ENCODE measurements at regions of chr6 and their contacts with region 1.

Region 1: GRCh38 chr6:130215526-130215925 is 7.2 kb downstream of the SAMD3 start:
- DNase-seq: peak; percentile 71 to 82 (median 78)
- H3K4me3 ChIP-seq: peak overlapping the region; percentile 7 to 39
- H3K4me3 Mint-ChIP-seq: peak overlapping the region; percentile 79 to 95 (median 86)
- H3K27ac ChIP-seq: peak overlapping the region; percentile 23
- H3K27ac Mint-ChIP-seq: peak overlapping the region; percentile 25 to 89 (median 69)
- H3K4me1 ChIP-seq: peaks cover 77% of the 10 kb centered on the region
- H3K4me1 Mint-ChIP-seq: peaks cover 38 to 78% (median 61%) of the 10 kb centered on the region in 4 donors
- H3K27me3 ChIP-seq: no peaks in the 10 kb centered on the region
- H3K27me3 Mint-ChIP-seq: no peaks in the 10 kb centered on the region

Region 2: DNA sequence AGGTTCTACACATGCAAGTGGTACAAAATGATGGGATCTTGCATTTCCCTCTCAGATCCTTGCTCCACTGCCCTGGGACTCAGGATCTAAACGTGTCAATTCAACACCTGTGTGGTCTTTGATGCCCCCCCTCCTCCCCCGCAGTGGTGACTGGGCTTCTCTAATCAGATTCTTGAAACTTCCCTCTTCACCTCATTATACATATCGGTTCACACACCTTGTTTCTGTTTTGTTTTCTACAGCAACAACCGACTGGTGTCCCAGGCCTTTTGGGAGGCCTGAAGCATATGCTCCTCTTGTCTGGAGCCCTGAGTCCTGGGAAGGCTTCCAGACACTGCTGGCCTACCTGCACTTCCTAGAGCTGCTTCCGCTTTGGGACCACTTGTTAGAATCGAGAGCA is 12.7 kb before region 1 on chr6:
- CTCF ChIA-PET with region 1: interaction called, 4 read pairs
- POLR2A ChIA-PET with region 1: interaction called, 57 read pairs
- intact Hi-C with region 1: loop called (anchors 1 kb)
- DNase-seq: peak in 1 of 5 donors; percentile 64
- H3K4me3 ChIP-seq: peak overlapping the region in 1 of 2 donors; percentile 5
- H3K4me3 Mint-ChIP-seq: peak overlapping the region in 7 of 8 donors; percentile 7 to 81 (median 47)
- H3K27ac ChIP-seq: no peak overlapping the region
- H3K27ac Mint-ChIP-seq: peak overlapping the region in 6 of 7 donors; percentile 10 to 82 (median 76)
- H3K4me1 ChIP-seq: peaks cover 44% of the 10 kb centered on the region
- H3K4me1 Mint-ChIP-seq: peaks cover 46 to 87% (median 70%) of the 10 kb centered on the region in 4 donors
- H3K27me3 ChIP-seq: no peaks in the 10 kb centered on the region
- H3K27me3 Mint-ChIP-seq: no peaks in the 10 kb centered on the region

Measured in CD4-positive, alpha-beta memory T cell (primary cell).